AG04449 (cell line): ENCODE measurements at regions of chr17 and their contacts with region 1.

Region 1: GRCh38 chr17:65294179-65294720 is 157.1 kb downstream of the RGS9 start:
- DNase-seq: no peak
- H3K4me3 ChIP-seq: no peak overlapping the region
- CTCF ChIP-seq: peak; percentile 89

Region 2: GRCh38 chr17:65278050-65278819 is 16.0 kb before region 1 on chr17:
- CTCF ChIA-PET with region 1: interaction called, 19 read pairs
- POLR2A ChIA-PET with region 1: no interaction called
- DNase-seq: no peak
- H3K4me3 ChIP-seq: no peak overlapping the region; the same call in 1 of the 2 replicates
- CTCF ChIP-seq: peak; percentile 84

Region 3: GRCh38 chr17:65307081-65307960 is 13.1 kb after region 1 on chr17:
- CTCF ChIA-PET with region 1: interaction called, 15 read pairs
- POLR2A ChIA-PET with region 1: no interaction called
- DNase-seq: no peak
- H3K4me3 ChIP-seq: no peak overlapping the region
- CTCF ChIP-seq: no peak

Region 4: GRCh38 chr17:65314212-65314611 is 20.0 kb after region 1 on chr17:
- CTCF ChIA-PET with region 1: interaction called, 14 read pairs
- POLR2A ChIA-PET with region 1: no interaction called
- DNase-seq: no peak
- H3K4me3 ChIP-seq: no peak overlapping the region
- CTCF ChIP-seq: no peak

Region 5: GRCh38 chr17:65556014-65556909 is 262.0 kb after region 1 on chr17:
- CTCF ChIA-PET with region 1: interaction called, 45 read pairs
- POLR2A ChIA-PET with region 1: no interaction called
- DNase-seq: no peak
- H3K4me3 ChIP-seq: no peak overlapping the region
- CTCF ChIP-seq: peak; percentile 74

Region 6: DNA sequence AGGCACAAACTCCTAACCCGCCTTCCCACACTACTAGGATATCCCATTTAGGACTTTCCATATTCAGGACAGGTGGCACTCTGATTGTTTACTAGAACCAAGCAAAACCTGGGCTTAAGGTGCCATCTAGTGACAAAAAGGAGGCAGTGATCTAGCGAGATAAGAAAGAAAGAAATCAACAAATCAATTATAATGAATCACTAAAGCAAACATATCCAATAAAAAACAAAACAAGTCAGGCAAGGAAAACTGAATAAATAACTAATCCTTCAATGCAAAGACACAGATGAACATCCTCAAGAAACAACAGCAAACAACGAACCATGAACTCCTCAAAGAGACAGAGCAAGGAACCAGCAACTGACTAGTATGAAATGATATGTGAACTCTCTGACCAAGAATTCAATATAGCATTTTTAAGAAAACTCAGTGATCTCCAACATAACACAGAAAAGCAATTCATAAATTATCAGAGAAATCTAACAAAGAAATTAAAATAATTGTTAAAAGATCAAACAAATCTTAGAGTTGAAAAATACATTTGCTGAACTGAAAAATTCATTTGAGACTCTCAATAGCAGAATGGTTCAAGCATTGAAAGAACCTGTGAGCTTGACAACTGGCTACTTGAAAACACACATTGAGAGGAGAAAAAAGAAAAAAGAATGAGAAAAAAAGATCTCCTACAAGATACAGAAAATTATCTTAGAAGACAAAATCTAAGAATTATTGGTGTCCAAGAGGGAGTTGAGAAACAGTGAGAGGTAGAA is 694.0 kb after region 1 on chr17:
- CTCF ChIA-PET with region 1: interaction called, 29 read pairs
- POLR2A ChIA-PET with region 1: no interaction called
- DNase-seq: no peak
- H3K4me3 ChIP-seq: no peak overlapping the region
- CTCF ChIP-seq: peak; percentile 36

Region 7: DNA sequence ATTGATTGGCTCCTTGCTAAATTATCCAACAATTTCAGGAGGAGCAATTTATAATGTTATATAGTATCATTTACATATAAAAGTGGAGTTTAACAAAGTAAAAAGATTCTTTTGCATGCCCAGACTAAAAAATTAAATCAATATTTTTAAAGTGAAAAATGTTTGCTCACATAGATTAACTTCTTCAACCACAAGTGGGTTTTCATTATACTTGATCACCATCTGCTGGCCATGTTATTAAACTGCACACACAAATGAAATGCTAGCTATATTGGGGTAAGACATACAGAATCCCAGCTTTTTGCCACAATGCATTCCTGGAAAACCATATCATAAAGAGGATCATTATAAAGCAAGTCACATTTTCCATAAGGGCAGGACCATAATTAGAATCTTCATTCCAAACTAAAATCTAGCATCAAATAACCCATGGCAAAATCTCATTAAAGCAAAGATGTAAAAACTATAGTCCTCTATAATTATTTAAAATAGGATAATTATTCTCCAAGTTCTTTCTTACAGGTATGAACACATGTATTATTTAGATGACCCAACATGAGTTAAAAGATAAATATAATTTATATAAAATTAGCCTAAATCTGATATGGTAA is 871.4 kb after region 1 on chr17:
- CTCF ChIA-PET with region 1: interaction called, 98 read pairs
- POLR2A ChIA-PET with region 1: no interaction called
- DNase-seq: peak; percentile 16
- H3K4me3 ChIP-seq: no peak overlapping the region
- CTCF ChIP-seq: peak; percentile 46